ENCODE measurements at regions of chr17 and their contacts with region 1.

Region 1: DNA sequence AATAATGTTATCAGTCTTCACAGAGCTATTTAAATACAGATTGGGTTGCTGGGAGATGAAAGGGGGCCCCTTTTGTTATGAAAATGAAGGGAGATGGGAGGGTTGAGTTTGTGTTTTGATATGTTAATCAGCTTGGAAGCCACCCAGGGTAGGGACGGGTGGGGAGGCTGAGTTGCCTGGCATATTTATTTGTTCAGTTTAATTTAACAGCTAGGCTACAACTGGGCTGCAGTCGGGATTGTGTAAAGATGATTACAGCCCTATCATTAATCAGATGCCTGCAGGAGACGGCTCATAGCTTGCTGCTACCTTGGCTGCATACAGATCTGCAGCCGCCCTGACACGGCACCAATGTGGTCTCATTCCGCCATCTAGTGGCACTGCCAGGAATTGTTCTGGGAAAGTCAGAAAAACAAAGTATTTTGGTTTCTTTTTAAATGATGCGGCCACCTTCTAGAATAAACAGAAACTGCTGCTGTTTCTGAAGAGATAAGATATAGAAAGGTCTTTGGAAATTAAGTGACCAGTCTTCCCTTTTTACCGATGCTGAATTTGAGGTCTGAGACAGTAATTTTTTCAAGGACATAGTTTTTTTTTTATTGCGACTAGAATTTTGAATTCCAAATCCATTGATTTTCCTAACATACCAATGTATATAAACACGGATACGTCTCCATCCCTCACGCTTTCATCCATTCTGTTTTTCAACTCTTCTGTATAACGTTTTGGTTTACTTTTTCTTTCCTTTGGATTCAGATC is 458.0 kb upstream of the ASIC2 start:
- DNase-seq: peak; percentile 74
- H3K4me3 ChIP-seq: peak overlapping the region; percentile 26 to 46; a peak in 3 of 4 replicates
- H3K27ac ChIP-seq: no peak overlapping the region
- H3K4me1 ChIP-seq: peaks cover 0 to 5% of the 10 kb centered on the region in 2 experiments; a peak in 2 of 4 replicates
- H3K27me3 ChIP-seq: no peaks in the 10 kb centered on the region
- CTCF ChIP-seq: peak; percentile 89
- EP300 ChIP-seq: no peak
- RAD21 ChIP-seq: peak; percentile 93

Region 2: GRCh38 chr17:33520426-33521330 is 230.4 kb before region 1 on chr17:
- CTCF ChIA-PET with region 1: interaction called, 15 read pairs
- POLR2A ChIA-PET with region 1: no interaction called
- DNase-seq: peak; percentile 83
- H3K4me3 ChIP-seq: no peak overlapping the region
- H3K27ac ChIP-seq: no peak overlapping the region
- H3K4me1 ChIP-seq: peaks cover 0 to 5% of the 10 kb centered on the region in 2 experiments; a peak in 1 of 4 replicates
- H3K27me3 ChIP-seq: no peaks in the 10 kb centered on the region
- CTCF ChIP-seq: peak; percentile 89
- EP300 ChIP-seq: no peak
- RAD21 ChIP-seq: peak; percentile 61

Region 3: GRCh38 chr17:33716957-33717356 is 34.2 kb before region 1 on chr17:
- CTCF ChIA-PET with region 1: interaction called, 12 read pairs
- POLR2A ChIA-PET with region 1: no interaction called
- DNase-seq: no peak
- H3K4me3 ChIP-seq: no peak overlapping the region
- H3K27ac ChIP-seq: no peak overlapping the region
- H3K4me1 ChIP-seq: no peaks in the 10 kb centered on the region
- H3K27me3 ChIP-seq: no peaks in the 10 kb centered on the region
- CTCF ChIP-seq: no peak
- EP300 ChIP-seq: no peak
- RAD21 ChIP-seq: no peak

Region 4: GRCh38 chr17:33732116-33732515 is 19.0 kb before region 1 on chr17:
- CTCF ChIA-PET with region 1: interaction called, 62 read pairs
- POLR2A ChIA-PET with region 1: no interaction called
- DNase-seq: no peak
- H3K4me3 ChIP-seq: no peak overlapping the region
- H3K27ac ChIP-seq: no peak overlapping the region
- H3K4me1 ChIP-seq: no peaks in the 10 kb centered on the region
- H3K27me3 ChIP-seq: no peaks in the 10 kb centered on the region
- CTCF ChIP-seq: no peak
- EP300 ChIP-seq: no peak
- RAD21 ChIP-seq: no peak

Region 5: GRCh38 chr17:33769066-33769465 is 17.9 kb after region 1 on chr17:
- CTCF ChIA-PET with region 1: interaction called, 11 read pairs
- POLR2A ChIA-PET with region 1: no interaction called
- DNase-seq: no peak
- H3K4me3 ChIP-seq: no peak overlapping the region
- H3K27ac ChIP-seq: no peak overlapping the region
- H3K4me1 ChIP-seq: peaks cover 0 to 10% of the 10 kb centered on the region in 2 experiments; a peak in 2 of 4 replicates
- H3K27me3 ChIP-seq: no peaks in the 10 kb centered on the region
- CTCF ChIP-seq: no peak
- EP300 ChIP-seq: no peak
- RAD21 ChIP-seq: no peak

Region 6: DNA sequence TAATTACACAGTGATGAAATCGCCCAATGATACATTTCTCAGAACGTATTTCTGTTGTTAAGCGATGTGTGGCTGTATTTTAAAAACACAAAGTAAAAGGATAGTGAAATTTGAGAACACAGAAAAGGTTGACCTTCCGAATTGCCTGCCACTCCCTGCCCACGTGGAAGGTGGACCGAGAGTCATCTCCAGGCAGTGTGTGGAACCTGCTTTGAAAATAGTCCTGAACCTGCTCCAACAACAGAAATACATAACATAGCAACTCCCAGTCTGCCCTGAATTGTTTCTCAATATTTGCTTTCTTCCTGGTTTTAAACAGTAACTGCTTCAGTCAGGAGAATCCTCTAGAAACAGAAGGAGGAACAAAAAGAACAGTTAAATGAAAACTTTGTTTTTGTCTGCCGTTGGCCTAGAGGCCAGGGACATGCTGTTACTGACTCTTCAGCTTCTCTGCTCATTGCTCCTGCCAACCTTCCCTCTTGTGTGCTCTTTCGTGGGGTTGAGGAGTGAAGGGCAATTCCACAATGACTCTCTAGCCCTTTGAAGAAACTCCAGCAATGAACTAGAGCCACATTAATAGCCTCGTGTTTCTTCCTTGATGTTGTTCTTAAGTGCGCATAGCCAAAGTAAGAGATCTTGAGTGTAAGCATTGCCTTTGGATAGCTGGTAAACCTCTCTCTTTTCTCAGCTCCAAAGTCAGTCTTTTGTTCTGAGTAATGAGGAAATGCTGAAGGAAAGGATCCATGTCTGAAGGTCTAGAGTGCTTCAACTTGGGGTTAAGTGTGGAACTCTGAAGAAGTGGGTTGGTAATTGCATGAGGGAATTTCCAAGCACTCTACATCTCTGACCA is 51.5 kb after region 1 on chr17:
- CTCF ChIA-PET with region 1: no interaction called
- POLR2A ChIA-PET with region 1: no interaction called
- DNase-seq: no peak
- H3K4me3 ChIP-seq: no peak overlapping the region
- H3K27ac ChIP-seq: no peak overlapping the region
- H3K4me1 ChIP-seq: peaks cover 0 to 6% of the 10 kb centered on the region in 2 experiments; a peak in 1 of 4 replicates
- H3K27me3 ChIP-seq: no peaks in the 10 kb centered on the region
- CTCF ChIP-seq: no peak
- EP300 ChIP-seq: no peak
- RAD21 ChIP-seq: no peak